ENCODE measurements at regions of chr6 and their contacts with region 1.

Region 1: DNA sequence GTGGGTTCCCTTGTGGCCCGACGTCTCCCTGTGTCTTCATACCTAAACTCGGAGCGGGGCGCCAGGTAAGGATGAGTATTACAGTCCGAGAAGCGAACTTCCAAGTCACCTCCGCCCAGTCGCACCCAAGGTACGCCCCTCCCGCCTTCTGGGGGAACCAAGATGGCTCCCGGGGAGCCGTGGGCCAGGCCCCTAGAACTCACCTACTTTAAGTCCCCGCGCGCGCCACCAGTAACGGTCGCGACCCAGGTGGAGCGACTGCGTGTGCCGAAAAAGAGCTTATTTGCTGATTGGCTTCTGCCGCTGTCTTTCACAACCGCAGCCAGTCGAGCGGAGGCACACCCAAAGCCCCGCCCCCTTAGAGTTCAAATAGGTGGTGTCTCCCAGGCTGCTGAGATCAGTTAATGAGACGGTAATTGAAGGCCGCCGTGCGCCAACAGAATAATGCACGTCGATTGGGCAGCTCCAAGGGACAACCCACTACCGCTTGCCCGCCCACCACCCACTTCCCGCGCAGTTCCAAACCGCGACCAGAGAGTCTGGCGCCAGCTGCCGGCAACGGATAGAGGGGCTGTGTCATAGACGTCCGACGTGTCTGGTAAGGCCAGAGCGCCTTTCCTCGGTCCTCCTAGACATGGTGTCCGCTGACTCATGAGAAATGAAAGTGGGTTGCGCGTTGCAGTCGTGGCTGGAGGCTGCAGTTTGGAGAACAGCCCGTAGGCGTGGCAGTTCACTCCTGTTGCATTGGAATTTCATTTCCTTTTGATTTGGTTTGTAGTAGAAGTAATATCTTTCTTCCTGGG is at the start of gene MDC1:
- DNase-seq: peak; percentile 83 to 100 (median 99)
- ATAC-seq: peak; percentile 84
- H3K4me3 ChIP-seq: peak within 1 kb of the TSS; percentile 73
- H3K4me3 Mint-ChIP-seq: peak within 1 kb of the TSS; percentile 90 to 99 (median 96)
- H3K27ac ChIP-seq: peak within 1 kb of the TSS; percentile 84
- H3K27ac Mint-ChIP-seq: peak within 1 kb of the TSS; percentile 97 to 100 (median 99)
- H3K4me1 ChIP-seq: peaks cover 20 to 22% of the 10 kb centered on the region in 2 donors
- H3K4me1 Mint-ChIP-seq: peaks cover 30 to 60% (median 52%) of the 10 kb centered on the region in 7 donors
- H3K27me3 ChIP-seq: no peaks in the 10 kb centered on the region
- H3K27me3 Mint-ChIP-seq: no peaks in the 10 kb centered on the region
- total RNA-seq, gene MDC1: 40.3 to 78.9 (median 62.0) TPM

Region 2: DNA sequence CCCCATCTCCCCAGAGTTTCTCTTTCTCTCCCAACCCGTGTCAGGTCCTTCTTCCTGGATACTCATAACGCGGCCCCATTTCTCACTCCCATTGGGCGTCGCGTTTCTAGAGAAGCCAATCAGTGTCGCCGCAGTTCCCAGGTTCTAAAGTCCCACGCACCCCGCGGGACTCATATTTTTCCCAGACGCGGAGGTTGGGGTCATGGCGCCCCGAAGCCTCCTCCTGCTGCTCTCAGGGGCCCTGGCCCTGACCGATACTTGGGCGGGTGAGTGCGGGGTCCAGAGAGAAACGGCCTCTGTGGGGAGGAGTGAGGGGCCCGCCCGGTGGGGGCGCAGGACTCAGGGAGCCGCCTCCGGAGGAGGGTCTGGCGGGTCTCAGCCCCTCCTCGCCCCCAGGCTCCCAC is 994.0 kb before region 1 on chr6 and contains the start of gene HLA-F:
- CTCF ChIA-PET with region 1: no interaction called
- POLR2A ChIA-PET with region 1: no interaction called
- intact Hi-C with region 1: loop called in 1 of 2 experiments (anchors 5 kb)
- DNase-seq: peak; percentile 56 to 87 (median 79)
- ATAC-seq: peak; percentile 91
- H3K4me3 ChIP-seq: peak within 1 kb of the TSS; percentile 98
- H3K4me3 Mint-ChIP-seq: peak within 1 kb of the TSS; percentile 82 to 97 (median 95)
- H3K27ac ChIP-seq: peak within 1 kb of the TSS; percentile 100
- H3K27ac Mint-ChIP-seq: peak within 1 kb of the TSS; percentile 92 to 98 (median 95)
- H3K4me1 ChIP-seq: peaks cover 47 to 48% of the 10 kb centered on the region in 2 donors
- H3K4me1 Mint-ChIP-seq: peaks cover 32 to 63% (median 50%) of the 10 kb centered on the region in 7 donors
- H3K27me3 ChIP-seq: no peaks in the 10 kb centered on the region
- H3K27me3 Mint-ChIP-seq: no peaks in the 10 kb centered on the region
- total RNA-seq, gene HLA-F: 502 to 678 (median 522) TPM

Region 3: DNA sequence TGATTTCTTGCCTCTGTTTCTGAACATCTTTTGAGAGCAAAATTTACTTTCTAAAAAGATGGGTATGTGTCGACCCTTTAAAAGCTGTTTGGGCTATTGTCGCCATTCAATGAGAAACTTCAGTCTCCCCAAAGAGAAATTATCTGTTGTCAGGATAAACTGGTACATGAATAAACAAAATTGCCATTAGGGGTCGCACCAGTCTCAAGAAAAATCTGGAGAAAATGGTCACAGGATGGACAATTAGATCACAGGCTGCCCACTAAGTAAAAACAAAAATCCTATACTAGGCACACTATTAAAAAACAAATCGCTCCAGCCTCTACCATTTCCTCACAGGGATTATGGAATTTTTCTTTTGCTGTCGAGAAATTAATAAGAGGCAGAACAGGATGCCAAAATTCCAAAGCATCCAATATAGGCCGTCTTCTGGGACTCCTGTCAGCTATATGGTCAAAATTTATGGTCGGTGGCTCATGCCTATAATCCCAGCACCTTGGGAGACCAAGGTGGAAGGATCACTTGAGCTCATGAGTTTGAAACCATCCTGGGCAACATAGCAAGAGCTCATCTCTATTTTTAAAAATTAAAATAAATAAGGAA is 233.5 kb before region 1 on chr6:
- CTCF ChIA-PET with region 1: interaction called, 14 read pairs
- POLR2A ChIA-PET with region 1: interaction called, 3 read pairs
- intact Hi-C with region 1: loop called in 1 of 2 experiments (anchors 1 kb)
- DNase-seq: peak in 4 of 9 donors; percentile 42 to 56 (median 54)
- ATAC-seq: no peak
- H3K4me3 ChIP-seq: no peak overlapping the region
- H3K4me3 Mint-ChIP-seq: no peak overlapping the region
- H3K27ac ChIP-seq: no peak overlapping the region
- H3K27ac Mint-ChIP-seq: peak overlapping the region in 1 of 9 donors; percentile 7
- H3K4me1 ChIP-seq: peaks cover 21 to 23% of the 10 kb centered on the region in 2 donors
- H3K4me1 Mint-ChIP-seq: peaks cover 19 to 49% (median 39%) of the 10 kb centered on the region in 7 donors
- H3K27me3 ChIP-seq: peaks cover 8 to 23% of the 10 kb centered on the region in 2 donors
- H3K27me3 Mint-ChIP-seq: peaks cover 26 to 52% (median 30%) of the 10 kb centered on the region in 5 donors

Region 4: DNA sequence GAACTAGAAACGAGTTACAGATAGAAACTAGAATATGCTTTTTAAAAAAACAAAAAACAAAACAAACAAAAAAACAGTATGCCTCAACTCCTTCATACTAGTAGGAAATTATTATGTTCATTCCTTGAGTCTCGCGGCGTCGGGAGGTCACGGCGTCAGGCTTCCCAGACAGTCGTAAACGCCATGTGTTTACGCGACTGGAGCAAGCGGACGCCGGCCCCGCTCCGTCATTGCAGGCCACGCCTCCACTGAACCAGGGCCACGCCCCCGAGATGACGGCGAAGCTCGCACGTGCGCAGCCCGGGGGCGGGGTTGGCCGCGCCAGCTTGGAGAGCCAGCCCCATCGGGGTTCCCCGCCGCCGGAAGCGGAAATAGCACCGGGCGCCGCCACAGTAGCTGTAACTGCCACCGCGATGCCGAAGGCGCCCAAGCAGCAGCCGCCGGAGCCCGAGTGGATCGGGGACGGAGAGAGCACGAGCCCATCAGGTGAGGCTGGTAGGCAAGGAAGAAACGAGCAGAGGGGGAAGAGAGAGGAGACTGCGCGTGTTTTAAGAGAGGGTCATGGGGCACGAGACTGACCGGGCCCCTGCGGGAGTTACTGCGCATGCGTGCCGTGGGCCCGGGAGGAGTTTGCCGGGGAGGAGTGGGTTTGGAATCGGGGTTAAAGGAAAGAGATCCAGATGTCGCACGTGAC is 146.0 kb before region 1 on chr6 and contains the start of gene ABCF1:
- CTCF ChIA-PET with region 1: interaction called, 6 read pairs
- POLR2A ChIA-PET with region 1: interaction called, 4 read pairs
- intact Hi-C with region 1: loop called (anchors 1 to 2 kb)
- DNase-seq: peak; percentile 98 to 100 (median 99)
- ATAC-seq: peak; percentile 99
- H3K4me3 ChIP-seq: peak within 1 kb of the TSS; percentile 94
- H3K4me3 Mint-ChIP-seq: peak within 1 kb of the TSS; percentile 94 to 100 (median 98)
- H3K27ac ChIP-seq: peak within 1 kb of the TSS; percentile 98
- H3K27ac Mint-ChIP-seq: peak within 1 kb of the TSS; percentile 96 to 100 (median 99)
- H3K4me1 ChIP-seq: peaks cover 33 to 38% of the 10 kb centered on the region in 2 donors
- H3K4me1 Mint-ChIP-seq: peaks cover 55 to 79% (median 64%) of the 10 kb centered on the region in 7 donors
- H3K27me3 ChIP-seq: no peaks in the 10 kb centered on the region
- H3K27me3 Mint-ChIP-seq: peaks cover 0 to 4% (median 0%) of the 10 kb centered on the region in 5 donors
- total RNA-seq, gene ABCF1: 65.1 to 116 (median 86.6) TPM

Region 5: DNA sequence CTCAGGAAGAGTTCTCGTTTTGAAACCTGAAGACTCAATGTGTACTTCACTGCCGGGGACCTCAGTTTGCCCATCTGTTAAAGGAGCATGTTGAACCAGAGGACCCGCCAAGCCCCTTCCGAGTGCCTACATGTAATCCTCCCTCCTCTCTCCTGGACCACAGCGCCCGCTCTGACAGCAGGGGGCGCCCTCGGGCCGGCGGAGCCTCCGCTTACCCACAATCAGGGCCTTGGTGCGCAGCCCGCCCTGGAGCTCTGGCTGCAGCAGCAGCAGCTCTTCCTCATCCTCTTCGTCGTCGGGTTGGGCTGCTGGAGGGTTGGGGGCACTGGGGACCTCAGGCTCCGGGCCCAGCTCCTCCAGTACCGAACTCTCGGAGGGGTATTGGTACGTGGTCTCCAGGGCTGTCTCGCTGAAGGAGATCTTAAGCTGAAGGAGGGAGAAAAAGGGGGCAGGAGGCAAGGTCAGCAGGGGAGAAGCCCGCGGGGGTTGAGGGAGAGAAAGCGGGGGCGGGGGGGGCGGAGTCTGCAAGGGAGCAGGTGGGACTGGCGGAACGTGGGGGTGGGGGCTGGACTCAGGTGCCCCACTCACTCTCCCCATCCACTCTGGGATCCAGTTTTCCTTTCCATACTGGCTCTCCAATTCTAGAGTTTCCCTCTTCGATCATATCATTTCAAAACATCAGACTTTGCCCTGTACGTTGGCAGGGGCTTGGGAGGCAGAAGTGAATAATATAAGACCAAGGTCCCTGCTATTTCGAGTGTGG is 38.1 kb before region 1 on chr6:
- CTCF ChIA-PET with region 1: interaction called, 304 read pairs
- POLR2A ChIA-PET with region 1: interaction called, 499 read pairs
- intact Hi-C with region 1: loop called (anchors 1 kb)
- DNase-seq: peak; percentile 86 to 97 (median 92)
- ATAC-seq: peak; percentile 65
- H3K4me3 ChIP-seq: peak overlapping the region; percentile 98
- H3K4me3 Mint-ChIP-seq: peak overlapping the region; percentile 90 to 100 (median 97)
- H3K27ac ChIP-seq: peak overlapping the region; percentile 95
- H3K27ac Mint-ChIP-seq: peak overlapping the region; percentile 85 to 99 (median 97)
- H3K4me1 ChIP-seq: peaks cover 5 to 24% of the 10 kb centered on the region in 2 donors
- H3K4me1 Mint-ChIP-seq: peaks cover 20 to 47% (median 38%) of the 10 kb centered on the region in 7 donors
- H3K27me3 ChIP-seq: no peaks in the 10 kb centered on the region
- H3K27me3 Mint-ChIP-seq: no peaks in the 10 kb centered on the region

Region 6: GRCh38 chr6:30877419-30878371 is 160.5 kb after region 1 on chr6:
- CTCF ChIA-PET with region 1: interaction called, 3 read pairs
- POLR2A ChIA-PET with region 1: no interaction called
- intact Hi-C with region 1: loop called in 1 of 2 experiments (anchors 5 kb)
- DNase-seq: peak; percentile 52 to 72 (median 63)
- ATAC-seq: peak; percentile 93
- H3K4me3 ChIP-seq: peak overlapping the region; percentile 40
- H3K4me3 Mint-ChIP-seq: peak overlapping the region; percentile 69 to 90 (median 86)
- H3K27ac ChIP-seq: peak overlapping the region; percentile 50
- H3K27ac Mint-ChIP-seq: peak overlapping the region; percentile 44 to 91 (median 84)
- H3K4me1 ChIP-seq: peaks cover 8 to 15% of the 10 kb centered on the region in 2 donors
- H3K4me1 Mint-ChIP-seq: peaks cover 10 to 31% (median 19%) of the 10 kb centered on the region in 7 donors
- H3K27me3 ChIP-seq: no peaks in the 10 kb centered on the region
- H3K27me3 Mint-ChIP-seq: peaks cover 0 to 7% (median 0%) of the 10 kb centered on the region in 5 donors

Region 7: DNA sequence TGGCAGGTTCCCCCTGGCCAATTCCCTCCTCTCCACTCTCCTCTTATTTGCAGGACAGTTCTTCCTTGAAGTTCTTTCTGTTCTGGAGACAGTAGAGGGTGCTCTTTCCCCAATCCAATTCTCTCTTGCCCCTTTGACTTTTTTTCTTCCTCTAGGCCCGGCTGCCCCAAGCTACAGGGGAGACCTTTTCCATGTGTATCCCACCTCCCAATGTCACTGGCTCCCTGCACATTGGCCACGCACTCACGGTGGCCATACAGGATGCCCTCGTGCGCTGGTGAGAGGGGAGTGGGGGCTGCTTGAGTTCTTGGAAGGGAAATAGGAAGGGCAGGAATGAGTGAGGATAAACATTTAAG is 198.3 kb after region 1 on chr6:
- CTCF ChIA-PET with region 1: no interaction called
- POLR2A ChIA-PET with region 1: no interaction called
- intact Hi-C with region 1: no loop called
- DNase-seq: peak in 6 of 9 donors; percentile 8 to 45 (median 35)
- ATAC-seq: no peak
- H3K4me3 ChIP-seq: no peak overlapping the region
- H3K4me3 Mint-ChIP-seq: peak overlapping the region; percentile 87 to 96 (median 92)
- H3K27ac ChIP-seq: no peak overlapping the region
- H3K27ac Mint-ChIP-seq: peak overlapping the region in 8 of 9 donors; percentile 54 to 89 (median 86)
- H3K4me1 ChIP-seq: peaks cover 13 to 17% of the 10 kb centered on the region in 2 donors
- H3K4me1 Mint-ChIP-seq: peaks cover 22 to 45% (median 36%) of the 10 kb centered on the region in 7 donors
- H3K27me3 ChIP-seq: no peaks in the 10 kb centered on the region
- H3K27me3 Mint-ChIP-seq: no peaks in the 10 kb centered on the region

Region 8: DNA sequence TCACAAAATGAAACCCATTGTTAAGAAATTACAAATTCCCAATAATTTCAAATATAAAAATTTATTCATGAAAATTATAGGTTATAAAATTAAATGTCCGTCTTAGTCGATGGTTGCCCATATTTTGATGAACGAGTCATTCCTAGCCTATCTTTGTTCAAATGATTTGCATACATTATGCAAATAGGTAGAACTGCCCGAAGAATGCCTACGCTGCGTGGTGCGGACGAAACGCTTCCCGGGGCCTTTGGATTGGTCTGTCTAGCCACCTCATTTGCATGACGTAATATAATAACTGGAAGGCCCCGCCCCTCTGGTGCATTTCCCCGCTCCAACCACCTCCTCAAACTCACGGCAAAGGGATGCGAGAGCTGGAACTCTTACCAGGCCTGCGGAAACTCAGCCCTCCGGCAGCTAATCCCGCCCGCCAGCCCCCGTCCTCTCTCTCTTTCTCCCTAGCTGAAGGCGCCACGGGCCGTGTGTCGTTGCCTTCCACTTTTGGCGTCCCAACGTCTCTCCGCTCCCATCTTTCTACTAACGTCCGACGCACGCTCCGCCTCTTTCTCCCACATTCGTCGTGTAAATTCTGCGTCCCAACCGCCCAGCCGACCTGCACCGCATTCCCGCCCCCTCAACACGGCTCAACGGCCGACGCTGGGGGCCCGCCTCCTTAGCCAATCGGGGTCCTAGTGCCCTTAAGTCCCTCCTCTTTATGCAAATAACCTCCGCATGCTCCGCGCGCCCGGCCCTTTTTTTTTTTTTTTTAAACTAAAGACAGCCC is 902.8 kb after region 1 on chr6:
- CTCF ChIA-PET with region 1: no interaction called
- POLR2A ChIA-PET with region 1: no interaction called
- intact Hi-C with region 1: loop called in 1 of 2 experiments (anchors 2 kb)
- DNase-seq: peak; percentile 81 to 97 (median 94)
- ATAC-seq: peak; percentile 88
- H3K4me3 ChIP-seq: peak overlapping the region; percentile 90
- H3K4me3 Mint-ChIP-seq: peak overlapping the region; percentile 87 to 97 (median 93)
- H3K27ac ChIP-seq: peak overlapping the region; percentile 96
- H3K27ac Mint-ChIP-seq: peak overlapping the region; percentile 95 to 99 (median 96)
- H3K4me1 ChIP-seq: peaks cover 14 to 23% of the 10 kb centered on the region in 2 donors
- H3K4me1 Mint-ChIP-seq: peaks cover 26 to 60% (median 53%) of the 10 kb centered on the region in 7 donors
- H3K27me3 ChIP-seq: no peaks in the 10 kb centered on the region
- H3K27me3 Mint-ChIP-seq: no peaks in the 10 kb centered on the region